Breast epithelium (tissue), 4 donors: ENCODE measurements at regions of chrX and their contacts with region 1.

Region 1: GRCh38 chrX:39820938-39821708 is 276.6 kb downstream of the BCOR start:
- DNase-seq: no peak
- H3K4me3 ChIP-seq: peak overlapping the region; percentile 35 to 67 (median 47)
- H3K27ac ChIP-seq: no peak overlapping the region
- H3K4me1 ChIP-seq: no peaks in the 10 kb centered on the region
- H3K27me3 ChIP-seq: peaks cover 0 to 79% of the 10 kb centered on the region in 2 donors
- CTCF ChIP-seq: no peak
- POLR2A ChIP-seq: no peak

Region 2: GRCh38 chrX:39058724-39059123 is 762.4 kb before region 1 on chrX:
- intact Hi-C with region 1: loop called (anchors 5 kb)
- DNase-seq: no peak
- H3K4me3 ChIP-seq: no peak overlapping the region
- H3K27ac ChIP-seq: no peak overlapping the region
- H3K4me1 ChIP-seq: no peaks in the 10 kb centered on the region
- H3K27me3 ChIP-seq: peaks cover 0 to 45% of the 10 kb centered on the region in 2 donors
- CTCF ChIP-seq: no peak
- POLR2A ChIP-seq: no peak

Region 3: DNA sequence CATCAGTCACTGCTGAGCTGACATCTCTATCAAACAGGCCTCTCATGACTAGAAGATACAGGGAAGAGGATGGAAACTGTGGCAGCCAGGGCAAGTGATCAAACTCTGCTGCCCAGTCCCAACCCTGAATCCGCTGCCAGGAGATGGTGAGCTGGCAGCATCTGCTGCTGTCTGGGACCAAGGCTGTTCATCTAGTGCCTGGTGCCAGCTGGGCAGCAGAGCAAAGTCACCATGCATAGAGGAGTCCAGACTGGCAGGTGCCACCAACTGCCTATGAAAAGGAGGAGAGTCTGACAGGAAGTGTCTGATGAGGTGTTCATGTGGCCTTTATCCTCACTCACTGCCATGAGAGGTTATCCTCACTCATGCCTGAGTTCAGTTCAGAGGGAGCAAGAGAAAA is 501.0 kb before region 1 on chrX:
- intact Hi-C with region 1: no loop called
- DNase-seq: no peak
- H3K4me3 ChIP-seq: no peak overlapping the region
- H3K27ac ChIP-seq: no peak overlapping the region
- H3K4me1 ChIP-seq: no peaks in the 10 kb centered on the region
- H3K27me3 ChIP-seq: peaks cover 0 to 30% of the 10 kb centered on the region in 2 donors
- CTCF ChIP-seq: no peak
- POLR2A ChIP-seq: no peak

Region 4: DNA sequence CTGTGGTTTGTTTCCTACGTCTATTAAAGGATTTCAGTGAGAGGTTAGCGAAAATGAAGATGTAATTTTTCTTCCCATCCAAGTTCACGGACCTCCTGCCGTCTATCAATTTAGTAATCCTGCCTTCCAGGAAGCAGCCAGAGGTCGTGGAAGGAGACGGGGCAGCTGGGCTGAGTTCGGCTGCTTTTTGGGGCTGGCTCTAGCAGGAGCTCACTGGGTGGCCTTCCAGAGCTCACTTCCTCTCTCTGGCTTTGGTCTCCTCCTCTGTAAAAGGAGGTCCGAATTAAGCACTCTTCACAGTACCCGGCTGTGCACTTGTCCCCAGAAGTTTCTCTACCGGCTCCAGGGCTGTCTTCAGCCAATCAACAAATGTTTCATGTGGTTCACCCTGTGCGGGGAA is 18.8 kb before region 1 on chrX:
- intact Hi-C with region 1: no loop called
- DNase-seq: no peak
- H3K4me3 ChIP-seq: no peak overlapping the region
- H3K27ac ChIP-seq: no peak overlapping the region
- H3K4me1 ChIP-seq: no peaks in the 10 kb centered on the region
- H3K27me3 ChIP-seq: peaks cover 0 to 50% of the 10 kb centered on the region in 2 donors
- CTCF ChIP-seq: no peak
- POLR2A ChIP-seq: no peak

Region 5: GRCh38 chrX:40068044-40068443 is 246.9 kb after region 1 on chrX:
- intact Hi-C with region 1: no loop called
- DNase-seq: no peak
- H3K4me3 ChIP-seq: no peak overlapping the region
- H3K27ac ChIP-seq: no peak overlapping the region
- H3K4me1 ChIP-seq: no peaks in the 10 kb centered on the region
- H3K27me3 ChIP-seq: peaks cover 0 to 21% of the 10 kb centered on the region in 2 donors
- CTCF ChIP-seq: no peak
- POLR2A ChIP-seq: no peak

Region 6: GRCh38 chrX:40298572-40299479 is 477.7 kb after region 1 on chrX:
- intact Hi-C with region 1: no loop called
- DNase-seq: no peak
- H3K4me3 ChIP-seq: no peak overlapping the region
- H3K27ac ChIP-seq: no peak overlapping the region
- H3K4me1 ChIP-seq: no peaks in the 10 kb centered on the region
- H3K27me3 ChIP-seq: peaks cover 0 to 59% of the 10 kb centered on the region in 2 donors
- CTCF ChIP-seq: no peak
- POLR2A ChIP-seq: no peak